RWPE1 (cell line): ENCODE measurements at regions of chr10 and their contacts with region 1.

Region 1: GRCh38 chr10:113802997-113803396 is 50.9 kb downstream of the DCLRE1A start:
- DNase-seq: no peak
- H3K27ac ChIP-seq: no peak overlapping the region
- CTCF ChIP-seq: no peak

Region 2: DNA sequence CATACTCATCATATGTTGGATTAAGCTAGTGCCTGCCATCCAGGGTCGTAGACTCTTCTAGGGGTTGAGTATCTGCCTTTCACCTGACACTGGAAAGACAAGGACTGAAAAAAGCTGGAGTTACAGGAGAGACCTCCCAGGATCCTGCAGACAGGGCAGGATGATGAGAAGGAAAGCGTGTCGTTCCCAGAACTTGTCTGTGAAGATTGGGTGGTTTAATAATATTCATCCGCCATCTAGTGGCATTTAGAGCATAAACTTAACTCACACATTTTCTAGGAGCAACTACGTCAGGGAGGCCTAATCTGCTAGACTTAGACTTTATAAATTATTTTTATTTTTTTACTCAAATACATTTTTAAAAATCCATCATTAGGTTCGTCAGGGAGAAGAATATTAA is 300.3 kb after region 1 on chr10:
- CTCF ChIA-PET with region 1: interaction called, 17 read pairs
- POLR2A ChIA-PET with region 1: no interaction called
- DNase-seq: peak; percentile 77
- H3K27ac ChIP-seq: no peak overlapping the region
- CTCF ChIP-seq: peak; percentile 59; the same call in 1 of the 2 replicates

Region 3: GRCh38 chr10:114110174-114110972 is 307.4 kb after region 1 on chr10:
- CTCF ChIA-PET with region 1: interaction called, 12 read pairs
- POLR2A ChIA-PET with region 1: no interaction called
- DNase-seq: peak; percentile 50
- H3K27ac ChIP-seq: no peak overlapping the region
- CTCF ChIP-seq: peak; percentile 18; the same call in 1 of the 2 replicates